Activated CD4-positive, alpha-beta T cell treated with anti-CD3 and anti-CD28 coated beads for 36 hours (primary cell): ENCODE measurements at regions of chr11 and their contacts with region 1.

Region 1: DNA sequence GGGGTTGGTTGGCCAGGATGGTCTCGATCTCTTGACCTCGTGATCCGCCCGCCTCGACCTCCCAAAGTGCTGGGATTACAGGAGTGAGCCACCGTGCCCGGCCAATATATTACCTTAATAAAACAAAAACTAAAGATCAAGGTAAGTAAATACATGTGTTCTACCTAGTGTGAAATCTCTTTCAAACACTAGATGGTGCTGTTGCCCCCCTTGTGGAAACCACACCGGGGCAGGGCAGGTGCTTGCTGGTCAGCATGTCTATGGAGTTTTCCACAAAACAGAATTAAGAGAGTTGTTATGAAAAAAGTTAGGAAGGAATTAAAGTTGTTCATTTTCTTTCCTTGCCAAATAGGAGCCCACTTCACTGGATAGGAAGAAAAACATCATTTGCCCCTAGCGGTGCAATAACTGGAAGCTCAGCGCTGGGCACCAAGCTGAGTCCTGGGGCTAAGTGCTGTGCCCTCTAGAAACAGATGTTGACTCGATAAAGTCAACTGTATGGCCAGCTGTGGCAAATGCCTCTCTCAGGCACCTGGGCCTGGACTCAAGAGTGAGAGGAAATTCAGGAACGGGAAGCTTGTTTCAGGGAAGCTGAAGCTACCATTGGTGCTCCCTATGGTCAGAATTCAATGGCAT is 6.3 kb upstream of the KCNJ5 start:
- DNase-seq: peak; percentile 74
- ATAC-seq: peak; percentile 92
- H3K4me3 Mint-ChIP-seq: no peak overlapping the region
- H3K27ac Mint-ChIP-seq: no peak overlapping the region
- H3K4me1 Mint-ChIP-seq: no peaks in the 10 kb centered on the region
- H3K27me3 Mint-ChIP-seq: peaks cover 54% of the 10 kb centered on the region

Region 2: GRCh38 chr11:128802358-128802981 is 82.4 kb before region 1 on chr11:
- CTCF ChIA-PET with region 1: no interaction called
- POLR2A ChIA-PET with region 1: no interaction called
- intact Hi-C with region 1: no loop called
- DNase-seq: no peak
- ATAC-seq: no peak
- H3K4me3 Mint-ChIP-seq: no peak overlapping the region
- H3K27ac Mint-ChIP-seq: no peak overlapping the region
- H3K4me1 Mint-ChIP-seq: peaks cover 17% of the 10 kb centered on the region
- H3K27me3 Mint-ChIP-seq: no peaks in the 10 kb centered on the region

Region 3: GRCh38 chr11:128905345-128906184 is 20.7 kb after region 1 on chr11:
- CTCF ChIA-PET with region 1: interaction called, 108 read pairs
- POLR2A ChIA-PET with region 1: no interaction called
- intact Hi-C with region 1: loop called (anchors 1 to 2 kb)
- DNase-seq: peak; percentile 71
- ATAC-seq: peak; percentile 80
- H3K4me3 Mint-ChIP-seq: peak overlapping the region; percentile 61
- H3K27ac Mint-ChIP-seq: no peak overlapping the region
- H3K4me1 Mint-ChIP-seq: peaks cover 6% of the 10 kb centered on the region
- H3K27me3 Mint-ChIP-seq: peaks cover 44% of the 10 kb centered on the region

Region 4: GRCh38 chr11:128948589-128948988 is 63.8 kb after region 1 on chr11:
- CTCF ChIA-PET with region 1: interaction called, 162 read pairs
- POLR2A ChIA-PET with region 1: no interaction called
- intact Hi-C with region 1: no loop called
- DNase-seq: no peak
- ATAC-seq: no peak
- H3K4me3 Mint-ChIP-seq: no peak overlapping the region
- H3K27ac Mint-ChIP-seq: no peak overlapping the region
- H3K4me1 Mint-ChIP-seq: no peaks in the 10 kb centered on the region
- H3K27me3 Mint-ChIP-seq: peaks cover 5% of the 10 kb centered on the region

Region 5: DNA sequence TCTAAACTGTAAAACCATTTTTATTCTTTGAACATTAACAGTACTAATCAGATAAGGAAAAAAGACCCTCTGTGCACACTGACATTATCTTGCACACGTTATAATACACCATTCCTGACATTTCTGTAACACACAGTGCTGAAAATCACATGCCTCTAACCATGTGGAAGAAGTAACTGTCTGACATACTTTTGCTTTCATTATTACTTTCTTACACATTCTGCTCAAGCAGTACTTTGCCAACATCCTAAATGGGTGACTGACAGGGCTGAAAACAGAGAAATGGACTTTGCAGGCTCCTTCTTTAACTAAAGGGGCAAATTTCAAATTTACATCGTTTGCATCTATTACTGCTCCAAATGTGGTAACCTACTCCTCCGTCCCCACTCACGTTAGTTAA is 80.7 kb after region 1 on chr11:
- CTCF ChIA-PET with region 1: interaction called, 162 read pairs
- POLR2A ChIA-PET with region 1: interaction called, 3 read pairs
- intact Hi-C with region 1: no loop called
- DNase-seq: no peak
- ATAC-seq: peak; percentile 88
- H3K4me3 Mint-ChIP-seq: no peak overlapping the region
- H3K27ac Mint-ChIP-seq: no peak overlapping the region
- H3K4me1 Mint-ChIP-seq: peaks cover 27% of the 10 kb centered on the region
- H3K27me3 Mint-ChIP-seq: no peaks in the 10 kb centered on the region

Region 6: GRCh38 chr11:129331871-129332274 is 447.1 kb after region 1 on chr11:
- CTCF ChIA-PET with region 1: interaction called, 4 read pairs
- POLR2A ChIA-PET with region 1: no interaction called
- intact Hi-C with region 1: loop called (anchors 1 to 5 kb)
- DNase-seq: peak; percentile 86
- ATAC-seq: peak; percentile 75
- H3K4me3 Mint-ChIP-seq: no peak overlapping the region
- H3K27ac Mint-ChIP-seq: no peak overlapping the region
- H3K4me1 Mint-ChIP-seq: peaks cover 5% of the 10 kb centered on the region
- H3K27me3 Mint-ChIP-seq: no peaks in the 10 kb centered on the region